Naive thymus-derived CD4-positive, alpha-beta T cell (primary cell): ENCODE measurements at regions of chr15 and their contacts with region 1.

Region 1: DNA sequence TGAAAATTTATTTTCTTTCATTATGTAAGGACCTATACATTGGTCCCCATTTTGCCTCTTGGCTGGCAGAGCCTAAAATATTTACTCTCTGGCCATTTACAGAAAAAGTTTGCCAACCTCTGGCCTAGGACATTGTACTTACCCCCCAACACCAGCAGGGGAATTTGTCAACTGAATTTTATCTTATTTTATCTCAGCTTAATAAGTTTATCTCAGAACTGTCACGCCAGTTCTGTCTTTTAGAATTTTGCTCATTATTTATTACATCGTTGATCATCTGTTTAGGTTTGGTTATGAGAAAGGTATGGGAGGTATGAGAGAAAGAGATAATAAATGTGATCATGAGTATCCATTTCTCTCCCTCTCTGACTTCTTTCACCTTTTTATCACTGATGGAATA is 38.3 kb downstream of the CHD2 start:
- DNase-seq: no peak
- ATAC-seq: no peak
- H3K4me3 ChIP-seq: no peak overlapping the region
- H3K4me3 Mint-ChIP-seq: no peak overlapping the region
- H3K27ac ChIP-seq: no peak overlapping the region
- H3K27ac Mint-ChIP-seq: peak overlapping the region in 5 of 9 donors; percentile 65 to 90 (median 66)
- H3K4me1 ChIP-seq: peaks cover 0 to 22% of the 10 kb centered on the region in 2 donors
- H3K4me1 Mint-ChIP-seq: peaks cover 20 to 66% (median 60%) of the 10 kb centered on the region in 7 donors
- H3K27me3 ChIP-seq: no peaks in the 10 kb centered on the region
- H3K27me3 Mint-ChIP-seq: no peaks in the 10 kb centered on the region

Region 2: DNA sequence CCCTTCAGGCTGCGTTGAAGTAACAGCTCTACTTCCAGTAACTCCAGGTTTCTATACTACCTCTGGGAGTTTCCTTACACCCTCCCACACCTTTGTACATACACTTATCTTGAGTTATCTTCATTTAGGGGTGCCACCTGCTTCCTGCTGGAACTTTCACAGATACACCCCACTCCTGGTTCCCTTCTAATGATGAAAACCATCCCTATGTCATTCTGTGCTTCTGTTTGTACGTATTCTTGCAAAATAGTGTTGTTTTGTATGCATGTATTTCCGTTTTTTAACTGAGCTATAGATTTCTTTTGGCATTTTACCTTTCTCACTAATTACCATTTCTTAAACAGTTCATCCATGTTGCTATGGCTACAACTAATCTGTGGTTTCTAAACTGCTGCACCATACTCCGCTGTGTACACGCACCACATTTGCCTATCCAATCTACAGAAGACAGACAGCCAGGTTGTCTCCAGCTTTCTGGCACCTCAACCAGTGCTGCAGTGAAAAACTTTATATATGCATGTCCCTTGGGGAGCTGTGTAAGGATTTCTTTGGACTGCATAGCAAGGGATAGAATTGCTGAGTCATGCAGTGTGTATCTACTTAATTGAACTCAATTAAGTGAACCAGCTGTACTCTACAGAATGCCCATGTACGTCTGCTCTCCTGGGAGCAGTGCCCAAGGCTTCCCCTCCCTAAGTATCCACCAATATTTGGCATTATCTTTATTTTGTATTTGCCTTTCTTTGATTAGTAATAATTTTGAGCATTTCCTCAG is 606.1 kb before region 1 on chr15:
- CTCF ChIA-PET with region 1: no interaction called
- POLR2A ChIA-PET with region 1: no interaction called
- intact Hi-C with region 1: no loop called
- DNase-seq: no peak
- ATAC-seq: no peak
- H3K4me3 ChIP-seq: no peak overlapping the region
- H3K4me3 Mint-ChIP-seq: no peak overlapping the region
- H3K27ac ChIP-seq: no peak overlapping the region
- H3K27ac Mint-ChIP-seq: no peak overlapping the region
- H3K4me1 ChIP-seq: no peaks in the 10 kb centered on the region
- H3K4me1 Mint-ChIP-seq: no peaks in the 10 kb centered on the region
- H3K27me3 ChIP-seq: no peaks in the 10 kb centered on the region
- H3K27me3 Mint-ChIP-seq: peaks cover under 1 to 38% (median 18%) of the 10 kb centered on the region in 5 donors

Region 3: GRCh38 chr15:92949604-92950249 is 11.3 kb after region 1 on chr15:
- CTCF ChIA-PET with region 1: interaction called, 3 read pairs
- POLR2A ChIA-PET with region 1: interaction called, 3 read pairs
- intact Hi-C with region 1: loop called in 1 of 2 experiments (anchors 1 kb)
- DNase-seq: peak in 3 of 9 donors; percentile 6 to 19 (median 14)
- ATAC-seq: no peak
- H3K4me3 ChIP-seq: no peak overlapping the region
- H3K4me3 Mint-ChIP-seq: peak overlapping the region in 1 of 10 donors; percentile 21
- H3K27ac ChIP-seq: no peak overlapping the region
- H3K27ac Mint-ChIP-seq: peak overlapping the region in 3 of 9 donors; percentile 56 to 77 (median 66)
- H3K4me1 ChIP-seq: no peaks in the 10 kb centered on the region
- H3K4me1 Mint-ChIP-seq: peaks cover 0 to 15% (median 8%) of the 10 kb centered on the region in 7 donors
- H3K27me3 ChIP-seq: no peaks in the 10 kb centered on the region
- H3K27me3 Mint-ChIP-seq: no peaks in the 10 kb centered on the region

Region 4: DNA sequence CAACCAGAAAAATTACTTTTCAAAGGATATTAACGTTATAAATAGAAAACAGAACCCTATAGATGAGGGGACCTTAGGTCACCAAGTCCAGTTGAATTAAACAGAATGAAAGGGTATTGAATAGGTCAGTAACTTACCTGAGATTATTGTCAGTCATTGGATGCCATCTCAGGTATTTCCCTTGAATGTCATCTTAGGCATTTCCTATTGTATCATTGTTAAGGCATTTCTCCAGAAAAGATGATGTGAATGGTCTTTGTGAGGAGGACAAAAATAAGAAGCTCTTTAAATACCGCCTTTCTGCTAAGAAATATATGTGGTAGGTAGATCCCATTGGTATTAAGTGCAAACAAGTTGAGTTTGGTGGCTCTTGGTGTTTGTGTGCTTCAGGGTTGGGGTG is 17.3 kb after region 1 on chr15:
- CTCF ChIA-PET with region 1: interaction called, 5 read pairs
- POLR2A ChIA-PET with region 1: interaction called, 3 read pairs
- intact Hi-C with region 1: loop called (anchors 1 to 2 kb)
- DNase-seq: no peak
- ATAC-seq: no peak
- H3K4me3 ChIP-seq: no peak overlapping the region
- H3K4me3 Mint-ChIP-seq: no peak overlapping the region
- H3K27ac ChIP-seq: no peak overlapping the region
- H3K27ac Mint-ChIP-seq: peak overlapping the region in 4 of 9 donors; percentile 7 to 68 (median 66)
- H3K4me1 ChIP-seq: peaks cover 0 to 12% of the 10 kb centered on the region in 2 donors
- H3K4me1 Mint-ChIP-seq: peaks cover 15 to 48% (median 44%) of the 10 kb centered on the region in 7 donors
- H3K27me3 ChIP-seq: no peaks in the 10 kb centered on the region
- H3K27me3 Mint-ChIP-seq: no peaks in the 10 kb centered on the region

Region 5: GRCh38 chr15:92979011-92979701 is 40.8 kb after region 1 on chr15:
- CTCF ChIA-PET with region 1: no interaction called
- POLR2A ChIA-PET with region 1: no interaction called
- intact Hi-C with region 1: loop called (anchors 5 kb)
- DNase-seq: no peak
- ATAC-seq: no peak
- H3K4me3 ChIP-seq: no peak overlapping the region
- H3K4me3 Mint-ChIP-seq: peak overlapping the region in 1 of 10 donors; percentile 51
- H3K27ac ChIP-seq: no peak overlapping the region
- H3K27ac Mint-ChIP-seq: peak overlapping the region in 7 of 9 donors; percentile 38 to 58 (median 54)
- H3K4me1 ChIP-seq: no peaks in the 10 kb centered on the region
- H3K4me1 Mint-ChIP-seq: peaks cover 11 to 35% (median 14%) of the 10 kb centered on the region in 7 donors
- H3K27me3 ChIP-seq: no peaks in the 10 kb centered on the region
- H3K27me3 Mint-ChIP-seq: no peaks in the 10 kb centered on the region

Region 6: GRCh38 chr15:93012786-93013185 is 74.4 kb after region 1 on chr15:
- CTCF ChIA-PET with region 1: interaction called, 5 read pairs
- POLR2A ChIA-PET with region 1: no interaction called
- intact Hi-C with region 1: loop called in 1 of 2 experiments (anchors 5 kb)
- DNase-seq: no peak
- ATAC-seq: no peak
- H3K4me3 ChIP-seq: no peak overlapping the region
- H3K4me3 Mint-ChIP-seq: no peak overlapping the region
- H3K27ac ChIP-seq: no peak overlapping the region
- H3K27ac Mint-ChIP-seq: peak overlapping the region in 6 of 9 donors; percentile 12 to 76 (median 36)
- H3K4me1 ChIP-seq: no peaks in the 10 kb centered on the region
- H3K4me1 Mint-ChIP-seq: peaks cover 2 to 19% (median 13%) of the 10 kb centered on the region in 7 donors
- H3K27me3 ChIP-seq: no peaks in the 10 kb centered on the region
- H3K27me3 Mint-ChIP-seq: no peaks in the 10 kb centered on the region